ENCODE measurements at regions of chr9 and their contacts with region 1.

Region 1: GRCh38 chr9:114653556-114654159 is 3.9 kb downstream of the TEX53 start:
- DNase-seq: peak; percentile 96
- H3K4me3 Mint-ChIP-seq: no peak overlapping the region
- H3K27ac Mint-ChIP-seq: peak overlapping the region; percentile 45
- H3K4me1 Mint-ChIP-seq: peaks cover 19% of the 10 kb centered on the region
- H3K27me3 Mint-ChIP-seq: no peaks in the 10 kb centered on the region

Region 2: GRCh38 chr9:114339130-114339908 is 314.3 kb before region 1 on chr9:
- intact Hi-C with region 1: loop called (anchors 1 kb)
- DNase-seq: peak; percentile 84
- H3K4me3 Mint-ChIP-seq: no peak overlapping the region
- H3K27ac Mint-ChIP-seq: no peak overlapping the region
- H3K4me1 Mint-ChIP-seq: peaks cover 13% of the 10 kb centered on the region
- H3K27me3 Mint-ChIP-seq: no peaks in the 10 kb centered on the region

Region 3: DNA sequence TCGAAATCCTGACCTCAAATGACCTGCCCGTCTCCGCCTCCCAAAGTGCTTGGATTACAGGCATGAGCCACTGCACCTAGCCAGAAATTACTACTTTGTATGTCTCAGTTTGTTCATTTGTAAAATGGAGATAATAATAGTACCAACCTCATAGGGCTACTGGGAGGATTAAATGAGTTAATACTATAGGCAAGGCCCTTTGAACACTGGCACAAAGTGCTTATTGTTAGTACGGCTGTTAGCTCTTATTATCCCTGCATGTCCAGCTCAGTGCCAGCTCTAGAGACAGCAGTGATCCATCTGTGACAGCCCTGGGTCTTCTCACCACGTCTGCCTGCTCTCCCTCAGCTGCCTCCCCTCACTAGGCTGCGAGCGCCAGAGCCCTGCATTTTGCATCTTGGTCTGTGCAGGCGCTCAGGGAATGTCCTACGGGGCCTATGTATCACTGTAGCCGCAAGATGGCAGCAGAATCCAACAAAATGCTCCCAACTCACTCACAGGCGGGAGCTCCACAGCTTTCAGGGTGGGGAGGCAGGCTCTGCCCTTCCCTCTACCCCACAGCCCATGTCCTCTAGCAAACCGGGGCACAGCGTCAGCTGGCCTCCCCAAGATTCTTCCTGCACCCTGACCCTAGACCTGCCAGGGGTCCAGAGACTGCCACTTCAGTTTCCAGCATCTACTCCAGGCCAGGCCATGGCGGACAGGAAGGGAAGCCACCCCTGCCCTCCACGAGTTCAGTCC is 248.2 kb before region 1 on chr9:
- intact Hi-C with region 1: loop called (anchors 1 kb)
- DNase-seq: peak; percentile 94
- H3K4me3 Mint-ChIP-seq: no peak overlapping the region
- H3K27ac Mint-ChIP-seq: peak overlapping the region; percentile 51
- H3K4me1 Mint-ChIP-seq: peaks cover 11% of the 10 kb centered on the region
- H3K27me3 Mint-ChIP-seq: no peaks in the 10 kb centered on the region

Region 4: DNA sequence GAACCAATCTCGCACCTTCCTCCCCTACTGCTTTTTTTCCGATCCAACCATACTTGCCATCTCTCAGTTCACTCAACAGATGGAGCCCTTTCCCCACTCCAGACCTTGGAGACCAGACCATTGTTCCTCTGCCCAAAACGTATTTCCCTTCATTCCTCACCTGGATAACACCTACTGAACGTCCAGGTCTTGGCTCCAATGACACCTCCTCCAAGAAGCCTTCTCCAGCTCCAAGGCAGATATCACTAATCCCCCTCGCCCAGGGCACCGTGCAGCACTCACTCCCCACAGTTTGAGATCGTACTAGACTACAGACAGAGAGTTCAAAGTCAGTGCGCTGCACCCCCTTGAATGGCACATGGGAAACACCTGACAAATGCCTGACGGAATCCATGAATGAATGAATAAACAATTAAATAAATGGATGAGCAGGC is 218.8 kb before region 1 on chr9:
- intact Hi-C with region 1: loop called (anchors 10 kb)
- DNase-seq: peak; percentile 71
- H3K4me3 Mint-ChIP-seq: no peak overlapping the region
- H3K27ac Mint-ChIP-seq: no peak overlapping the region
- H3K4me1 Mint-ChIP-seq: peaks cover 4% of the 10 kb centered on the region
- H3K27me3 Mint-ChIP-seq: peaks cover 8% of the 10 kb centered on the region

Region 5: DNA sequence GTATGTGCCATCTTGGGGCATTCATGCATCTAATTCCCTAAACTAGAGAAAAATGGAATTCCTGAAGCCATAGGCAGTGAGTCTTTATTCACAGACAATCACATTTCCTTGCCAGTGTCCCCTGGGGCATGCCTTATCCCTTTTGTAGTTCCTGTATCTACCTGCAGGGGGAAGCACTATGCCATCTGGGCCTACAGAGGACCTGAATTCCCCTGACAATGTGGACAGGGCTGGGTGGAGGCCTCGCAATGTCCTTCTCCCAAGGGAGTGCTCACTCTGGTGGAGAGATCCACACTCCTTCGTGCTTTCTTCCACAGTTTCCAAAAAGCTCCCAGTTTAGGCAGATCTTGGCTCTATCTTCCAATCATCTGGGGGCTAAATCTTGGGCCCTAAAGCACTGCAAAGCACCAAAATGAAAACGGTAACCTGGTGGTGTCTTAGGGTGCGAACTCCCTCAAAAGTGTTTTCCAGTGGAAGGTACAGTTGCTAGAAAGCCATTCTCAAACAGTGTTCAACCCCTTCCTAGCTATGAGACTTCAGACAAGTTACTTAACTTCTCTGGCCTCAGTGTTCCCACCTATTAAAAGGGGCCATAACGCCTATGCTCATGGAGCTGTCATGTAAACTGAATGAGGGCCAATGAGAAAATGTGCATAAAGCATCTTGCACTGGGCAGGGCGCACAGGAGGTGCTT is 165.9 kb before region 1 on chr9:
- intact Hi-C with region 1: loop called (anchors 1 kb)
- DNase-seq: peak; percentile 92
- H3K4me3 Mint-ChIP-seq: no peak overlapping the region
- H3K27ac Mint-ChIP-seq: peak overlapping the region; percentile 12
- H3K4me1 Mint-ChIP-seq: peaks cover 32% of the 10 kb centered on the region
- H3K27me3 Mint-ChIP-seq: peaks cover 8% of the 10 kb centered on the region

Region 6: DNA sequence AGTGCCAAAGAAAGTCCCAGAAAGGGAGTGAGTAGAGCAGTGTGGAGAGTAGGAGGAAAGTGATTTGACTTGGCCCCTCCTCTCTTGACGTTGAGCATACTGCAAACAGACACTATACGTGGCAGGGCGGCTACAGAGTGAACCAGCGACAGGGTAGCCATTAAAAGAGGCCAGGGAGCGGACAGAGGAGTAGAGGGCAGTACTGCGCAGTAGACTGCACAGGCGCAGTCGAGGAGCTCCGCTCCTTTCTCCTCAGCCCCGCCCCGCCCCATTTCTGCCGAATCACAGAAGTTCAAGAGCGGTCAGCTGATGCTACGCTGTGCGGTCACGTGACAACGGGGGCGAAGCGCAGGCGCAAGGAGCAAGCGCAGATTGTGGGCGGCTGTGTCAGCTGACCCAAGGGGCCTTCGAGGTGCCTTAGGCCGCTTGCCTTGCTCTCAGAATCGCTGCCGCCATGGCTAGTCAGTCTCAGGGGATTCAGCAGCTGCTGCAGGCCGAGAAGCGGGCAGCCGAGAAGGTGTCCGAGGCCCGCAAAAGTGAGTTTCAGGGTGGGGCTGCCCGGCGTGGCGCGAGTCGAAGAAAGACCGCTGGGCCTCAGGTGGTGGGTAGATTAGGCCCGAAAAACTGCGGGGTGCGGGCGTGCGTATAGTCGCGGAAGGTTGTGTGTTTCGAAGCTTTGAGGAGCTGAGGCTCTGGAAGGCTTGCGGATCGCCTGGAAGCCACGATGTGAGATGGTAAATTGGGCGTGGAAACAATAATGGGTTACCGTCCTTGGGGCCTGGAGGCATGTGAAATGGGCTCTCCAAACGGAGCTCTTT is 66.1 kb before region 1 on chr9 and contains the start of gene ATP6V1G1:
- intact Hi-C with region 1: loop called (anchors 1 kb)
- DNase-seq: peak; percentile 100
- H3K4me3 Mint-ChIP-seq: peak within 1 kb of the TSS; percentile 98
- H3K27ac Mint-ChIP-seq: peak within 1 kb of the TSS; percentile 99
- H3K4me1 Mint-ChIP-seq: peaks cover 43% of the 10 kb centered on the region
- H3K27me3 Mint-ChIP-seq: peaks cover 4% of the 10 kb centered on the region
- total RNA-seq, gene ATP6V1G1: 46.7 and 47.1 TPM in 2 replicates

Region 7: GRCh38 chr9:114611516-114612271 is 42.0 kb before region 1 on chr9:
- intact Hi-C with region 1: loop called (anchors 2 kb)
- DNase-seq: no peak
- H3K4me3 Mint-ChIP-seq: peak overlapping the region; percentile 86
- H3K27ac Mint-ChIP-seq: peak overlapping the region; percentile 89
- H3K4me1 Mint-ChIP-seq: peaks cover 41% of the 10 kb centered on the region
- H3K27me3 Mint-ChIP-seq: no peaks in the 10 kb centered on the region